CD8-positive, alpha-beta T cell (primary cell): ENCODE measurements at regions of chr5 and their contacts with region 1.

Region 1: DNA sequence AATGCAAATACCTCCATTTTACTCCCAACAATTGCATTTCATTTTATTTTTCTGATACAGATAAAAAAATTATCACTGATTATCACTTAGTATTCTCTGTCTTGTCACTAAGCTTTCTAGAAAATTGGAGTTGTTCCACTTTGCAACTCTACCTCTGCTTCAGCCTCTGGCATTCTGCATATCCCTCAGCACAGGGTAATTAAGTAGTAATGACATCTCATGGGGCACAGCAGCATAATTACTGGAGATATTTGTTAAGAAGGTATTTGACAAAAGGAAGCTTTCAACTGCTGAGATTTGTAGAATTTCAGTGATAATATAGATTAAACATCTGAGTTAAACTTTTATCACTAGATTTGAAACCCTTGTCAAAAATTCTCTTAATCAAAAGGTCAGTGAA is 446.2 kb downstream of the HTR1A start:
- DNase-seq: no peak
- ATAC-seq: no peak
- H3K4me3 ChIP-seq: no peak overlapping the region
- H3K4me3 Mint-ChIP-seq: no peak overlapping the region
- H3K27ac ChIP-seq: no peak overlapping the region
- H3K27ac Mint-ChIP-seq: no peak overlapping the region
- H3K4me1 ChIP-seq: no peaks in the 10 kb centered on the region
- H3K4me1 Mint-ChIP-seq: no peaks in the 10 kb centered on the region
- H3K27me3 ChIP-seq: no peaks in the 10 kb centered on the region
- H3K27me3 Mint-ChIP-seq: no peaks in the 10 kb centered on the region
- CTCF ChIP-seq: no peak

Region 2: GRCh38 chr5:63535840-63536602 is 20.0 kb after region 1 on chr5:
- CTCF ChIA-PET with region 1: no interaction called
- POLR2A ChIA-PET with region 1: no interaction called
- intact Hi-C with region 1: no loop called
- DNase-seq: no peak
- ATAC-seq: no peak
- H3K4me3 ChIP-seq: no peak overlapping the region
- H3K4me3 Mint-ChIP-seq: no peak overlapping the region
- H3K27ac ChIP-seq: no peak overlapping the region
- H3K27ac Mint-ChIP-seq: no peak overlapping the region
- H3K4me1 ChIP-seq: no peaks in the 10 kb centered on the region
- H3K4me1 Mint-ChIP-seq: no peaks in the 10 kb centered on the region
- H3K27me3 ChIP-seq: no peaks in the 10 kb centered on the region
- H3K27me3 Mint-ChIP-seq: no peaks in the 10 kb centered on the region
- CTCF ChIP-seq: no peak

Region 3: DNA sequence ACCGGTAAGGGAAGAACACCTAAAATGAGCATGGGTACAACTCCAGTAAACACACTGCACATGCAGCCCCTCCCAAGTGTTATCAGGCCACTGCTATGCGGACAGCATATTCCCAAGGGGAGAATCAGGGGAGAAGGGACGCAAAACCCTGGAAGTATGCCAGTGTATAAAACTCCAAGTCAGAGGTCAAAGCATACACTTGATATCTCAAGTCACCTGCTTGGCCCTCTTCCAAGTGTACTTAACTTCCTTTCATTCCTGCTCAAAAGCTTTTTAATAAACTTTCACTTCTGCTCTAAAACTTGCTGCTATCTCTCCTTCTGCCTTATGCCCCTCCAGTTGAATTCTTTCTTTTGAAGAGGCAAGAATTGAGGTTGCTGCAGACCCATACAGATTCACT is 38.2 kb after region 1 on chr5:
- CTCF ChIA-PET with region 1: no interaction called
- POLR2A ChIA-PET with region 1: no interaction called
- intact Hi-C with region 1: loop called in 1 of 2 experiments (anchors 5 kb)
- DNase-seq: no peak
- ATAC-seq: no peak
- H3K4me3 ChIP-seq: no peak overlapping the region
- H3K4me3 Mint-ChIP-seq: no peak overlapping the region
- H3K27ac ChIP-seq: no peak overlapping the region
- H3K27ac Mint-ChIP-seq: no peak overlapping the region
- H3K4me1 ChIP-seq: no peaks in the 10 kb centered on the region
- H3K4me1 Mint-ChIP-seq: no peaks in the 10 kb centered on the region
- H3K27me3 ChIP-seq: no peaks in the 10 kb centered on the region
- H3K27me3 Mint-ChIP-seq: no peaks in the 10 kb centered on the region
- CTCF ChIP-seq: no peak